PC-9 (cell line): ENCODE measurements at regions of chr6 and their contacts with region 1.

Region 1: DNA sequence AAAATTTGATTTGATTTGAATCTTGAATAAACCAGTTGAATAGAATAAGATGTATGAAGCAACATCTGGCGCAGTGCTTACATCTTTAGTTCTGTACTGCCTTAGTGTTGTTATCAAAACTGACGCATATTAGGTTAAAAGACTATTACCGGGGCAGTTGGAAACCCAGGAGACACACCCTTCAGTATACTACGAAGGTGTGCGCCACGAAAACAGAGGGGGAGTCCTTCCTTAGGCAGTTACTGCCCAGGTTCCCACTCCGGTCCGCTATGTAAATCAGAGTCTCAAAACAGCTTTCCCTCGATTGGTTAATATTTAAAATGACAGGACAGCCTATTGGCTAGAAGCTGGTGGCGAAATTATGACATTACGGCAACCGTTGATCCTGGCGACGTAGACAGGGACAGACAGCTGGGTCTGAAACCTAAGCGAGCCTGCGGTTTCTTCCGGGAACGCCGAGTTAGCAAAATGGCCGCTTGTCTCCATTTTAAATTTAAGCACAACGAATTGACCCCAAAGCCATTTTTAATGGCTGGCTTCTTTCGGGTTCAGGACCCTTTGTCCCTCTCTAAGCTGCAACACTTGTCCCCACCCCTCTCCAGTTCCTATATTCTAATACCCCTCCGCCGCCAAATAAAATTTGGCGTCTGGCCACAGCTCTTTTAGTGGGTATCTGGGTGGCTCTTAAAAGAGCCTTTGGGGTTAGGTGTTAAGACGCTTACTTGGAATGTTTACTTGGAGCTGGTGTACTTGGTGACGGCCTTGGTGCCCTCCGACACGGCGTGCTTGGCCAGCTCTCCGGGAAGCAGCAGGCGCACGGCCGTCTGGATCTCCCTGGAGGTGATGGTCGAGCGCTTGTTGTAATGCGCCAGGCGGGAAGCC is 35.8 kb downstream of the HFE start:
- DNase-seq: peak; percentile 91 to 98
- H3K4me3 ChIP-seq: peak overlapping the region; percentile 86
- H3K27ac ChIP-seq: peak overlapping the region; percentile 78
- H3K4me1 ChIP-seq: peaks cover 22% of the 10 kb centered on the region
- H3K27me3 ChIP-seq: no peaks in the 10 kb centered on the region
- CTCF ChIP-seq: no peak

Region 2: DNA sequence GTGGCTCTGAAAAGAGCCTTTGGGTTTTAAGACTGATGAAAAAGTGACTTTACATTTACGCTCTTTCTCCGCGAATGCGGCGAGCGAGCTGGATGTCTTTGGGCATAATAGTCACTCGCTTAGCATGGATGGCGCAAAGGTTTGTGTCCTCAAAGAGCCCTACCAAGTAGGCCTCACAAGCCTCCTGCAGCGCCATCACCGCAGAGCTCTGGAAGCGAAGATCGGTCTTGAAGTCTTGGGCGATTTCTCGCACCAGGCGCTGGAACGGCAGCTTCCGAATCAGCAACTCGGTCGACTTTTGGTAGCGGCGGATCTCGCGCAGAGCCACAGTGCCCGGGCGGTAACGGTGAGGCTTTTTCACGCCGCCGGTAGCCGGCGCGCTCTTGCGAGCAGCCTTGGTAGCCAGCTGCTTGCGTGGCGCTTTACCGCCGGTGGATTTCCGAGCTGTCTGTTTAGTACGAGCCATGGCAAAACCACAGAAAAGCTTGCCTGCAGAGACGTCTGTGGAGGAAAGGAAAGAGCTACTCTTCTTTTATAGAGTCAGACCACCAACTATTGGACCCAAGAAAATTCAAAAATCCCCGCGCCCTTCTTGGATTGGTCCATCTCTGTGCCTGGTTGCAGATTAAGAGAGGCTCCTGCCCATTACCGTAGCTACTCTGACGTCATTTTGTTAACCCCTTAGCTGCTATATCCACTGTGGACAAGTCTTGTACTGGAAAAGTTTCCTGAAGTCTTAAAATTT is 91.3 kb before region 1 on chr6:
- CTCF ChIA-PET with region 1: no interaction called
- POLR2A ChIA-PET with region 1: interaction called, 78 read pairs
- intact Hi-C with region 1: loop called (anchors 1 kb)
- DNase-seq: peak; percentile 91 to 95
- H3K4me3 ChIP-seq: peak overlapping the region; percentile 81
- H3K27ac ChIP-seq: peak overlapping the region; percentile 79
- H3K4me1 ChIP-seq: peaks cover 46% of the 10 kb centered on the region
- H3K27me3 ChIP-seq: no peaks in the 10 kb centered on the region
- CTCF ChIP-seq: no peak

Region 3: GRCh38 chr6:26054857-26055669 is 68.0 kb before region 1 on chr6:
- CTCF ChIA-PET with region 1: no interaction called
- POLR2A ChIA-PET with region 1: interaction called, 15 read pairs
- intact Hi-C with region 1: no loop called
- DNase-seq: peak; percentile 79 to 94
- H3K4me3 ChIP-seq: peak overlapping the region; percentile 79
- H3K27ac ChIP-seq: peak overlapping the region; percentile 95
- H3K4me1 ChIP-seq: peaks cover 26% of the 10 kb centered on the region
- H3K27me3 ChIP-seq: no peaks in the 10 kb centered on the region
- CTCF ChIP-seq: 0 out of 2 replicates have a peak, but pooled peaks have one; percentile 16

Region 4: GRCh38 chr6:26175428-26176181 is 52.6 kb after region 1 on chr6:
- CTCF ChIA-PET with region 1: no interaction called
- POLR2A ChIA-PET with region 1: interaction called, 3 read pairs
- intact Hi-C with region 1: loop called (anchors 1 kb)
- DNase-seq: no peak
- H3K4me3 ChIP-seq: no peak overlapping the region
- H3K27ac ChIP-seq: no peak overlapping the region
- H3K4me1 ChIP-seq: peaks cover 23% of the 10 kb centered on the region
- H3K27me3 ChIP-seq: no peaks in the 10 kb centered on the region
- CTCF ChIP-seq: peak; percentile 82

Region 5: DNA sequence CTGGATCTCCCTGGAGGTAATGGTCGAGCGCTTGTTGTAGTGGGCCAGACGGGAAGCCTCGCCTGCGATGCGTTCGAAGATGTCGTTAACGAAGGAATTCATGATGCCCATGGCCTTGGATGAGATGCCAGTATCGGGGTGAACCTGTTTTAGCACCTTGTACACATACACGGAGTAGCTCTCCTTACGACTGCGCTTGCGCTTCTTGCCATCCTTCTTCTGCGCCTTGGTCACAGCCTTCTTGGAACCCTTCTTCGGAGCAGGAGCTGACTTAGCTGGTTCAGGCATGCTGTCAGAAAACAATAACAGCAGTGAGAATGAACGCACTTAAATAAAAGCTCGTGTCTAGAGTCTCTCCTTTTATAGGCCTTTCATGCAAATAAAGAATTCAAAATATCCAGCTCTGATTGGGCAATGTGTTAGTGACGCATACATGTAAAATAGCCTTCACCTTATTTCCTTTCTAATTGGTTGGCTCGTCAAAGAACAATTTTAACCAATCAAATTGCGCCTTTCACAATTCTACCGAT is 93.4 kb after region 1 on chr6:
- CTCF ChIA-PET with region 1: no interaction called
- POLR2A ChIA-PET with region 1: interaction called, 49 read pairs
- intact Hi-C with region 1: no loop called
- DNase-seq: peak; percentile 65 to 95
- H3K4me3 ChIP-seq: peak overlapping the region; percentile 72
- H3K27ac ChIP-seq: peak overlapping the region; percentile 80
- H3K4me1 ChIP-seq: 0 out of 2 replicates have a peak, but pooled peaks cover 14% of the 10 kb centered on the region
- H3K27me3 ChIP-seq: no peaks in the 10 kb centered on the region
- CTCF ChIP-seq: no peak

Region 6: GRCh38 chr6:26568601-26569432 is 445.8 kb after region 1 on chr6:
- CTCF ChIA-PET with region 1: no interaction called
- POLR2A ChIA-PET with region 1: interaction called, 39 read pairs
- intact Hi-C with region 1: no loop called
- DNase-seq: peak; percentile 90 to 97
- H3K4me3 ChIP-seq: peak overlapping the region; percentile 59
- H3K27ac ChIP-seq: no peak overlapping the region
- H3K4me1 ChIP-seq: no peaks in the 10 kb centered on the region
- H3K27me3 ChIP-seq: no peaks in the 10 kb centered on the region
- CTCF ChIP-seq: peak; percentile 13; the same call in 1 of the 2 replicates

Region 7: DNA sequence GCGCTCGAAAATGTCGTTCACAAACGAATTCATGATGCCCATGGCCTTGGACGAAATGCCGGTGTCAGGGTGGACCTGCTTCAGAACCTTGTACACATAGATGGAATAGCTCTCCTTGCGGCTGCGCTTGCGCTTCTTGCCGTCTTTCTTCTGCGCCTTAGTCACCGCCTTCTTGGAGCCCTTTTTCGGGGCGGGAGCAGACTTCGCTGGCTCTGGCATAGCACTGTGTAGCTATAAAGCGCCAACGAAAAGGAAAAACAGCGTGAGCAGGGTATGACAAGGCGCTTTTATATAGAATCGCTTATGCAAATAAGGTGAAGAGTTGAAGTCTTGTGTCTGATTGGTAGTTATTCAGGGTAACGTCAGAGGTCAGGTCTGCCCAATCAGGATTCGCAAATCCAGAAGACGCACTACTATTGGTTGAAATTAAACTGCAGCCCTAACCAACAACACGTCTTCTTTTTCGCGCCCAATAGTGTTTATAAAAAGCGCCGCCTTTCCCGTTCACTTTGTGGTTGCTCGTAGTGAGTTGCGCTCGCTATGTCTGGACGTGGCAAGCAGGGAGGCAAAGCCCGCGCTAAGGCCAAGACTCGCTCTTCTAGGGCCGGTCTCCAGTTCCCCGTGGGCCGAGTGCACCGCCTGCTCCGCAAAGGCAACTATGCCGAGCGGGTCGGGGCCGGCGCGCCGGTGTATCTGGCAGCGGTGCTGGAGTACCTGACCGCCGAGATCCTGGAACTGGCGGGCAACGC is 1009.7 kb after region 1 on chr6:
- CTCF ChIA-PET with region 1: no interaction called
- POLR2A ChIA-PET with region 1: interaction called, 6 read pairs
- intact Hi-C with region 1: loop called (anchors 1 kb)
- DNase-seq: peak; percentile 95 to 98
- H3K4me3 ChIP-seq: peak overlapping the region; percentile 74
- H3K27ac ChIP-seq: peak overlapping the region; percentile 80
- H3K4me1 ChIP-seq: peaks cover 16% of the 10 kb centered on the region
- H3K27me3 ChIP-seq: no peaks in the 10 kb centered on the region
- CTCF ChIP-seq: no peak